ENCODE measurements at regions of chr2 and their contacts with region 1.

Region 1: GRCh38 chr2:152635635-152636298 is 81.5 kb downstream of the PRPF40A start:
- DNase-seq: peak; percentile 51
- H3K4me3 Mint-ChIP-seq: no peak overlapping the region
- H3K27ac Mint-ChIP-seq: no peak overlapping the region
- H3K4me1 Mint-ChIP-seq: peaks cover 6% of the 10 kb centered on the region
- H3K27me3 Mint-ChIP-seq: peaks cover 2% of the 10 kb centered on the region

Region 2: GRCh38 chr2:152036611-152037469 is 598.9 kb before region 1 on chr2:
- intact Hi-C with region 1: loop called (anchors 1 kb)
- DNase-seq: peak; percentile 9
- H3K4me3 Mint-ChIP-seq: no peak overlapping the region
- H3K27ac Mint-ChIP-seq: no peak overlapping the region
- H3K4me1 Mint-ChIP-seq: no peaks in the 10 kb centered on the region
- H3K27me3 Mint-ChIP-seq: peaks cover 5% of the 10 kb centered on the region

Region 3: DNA sequence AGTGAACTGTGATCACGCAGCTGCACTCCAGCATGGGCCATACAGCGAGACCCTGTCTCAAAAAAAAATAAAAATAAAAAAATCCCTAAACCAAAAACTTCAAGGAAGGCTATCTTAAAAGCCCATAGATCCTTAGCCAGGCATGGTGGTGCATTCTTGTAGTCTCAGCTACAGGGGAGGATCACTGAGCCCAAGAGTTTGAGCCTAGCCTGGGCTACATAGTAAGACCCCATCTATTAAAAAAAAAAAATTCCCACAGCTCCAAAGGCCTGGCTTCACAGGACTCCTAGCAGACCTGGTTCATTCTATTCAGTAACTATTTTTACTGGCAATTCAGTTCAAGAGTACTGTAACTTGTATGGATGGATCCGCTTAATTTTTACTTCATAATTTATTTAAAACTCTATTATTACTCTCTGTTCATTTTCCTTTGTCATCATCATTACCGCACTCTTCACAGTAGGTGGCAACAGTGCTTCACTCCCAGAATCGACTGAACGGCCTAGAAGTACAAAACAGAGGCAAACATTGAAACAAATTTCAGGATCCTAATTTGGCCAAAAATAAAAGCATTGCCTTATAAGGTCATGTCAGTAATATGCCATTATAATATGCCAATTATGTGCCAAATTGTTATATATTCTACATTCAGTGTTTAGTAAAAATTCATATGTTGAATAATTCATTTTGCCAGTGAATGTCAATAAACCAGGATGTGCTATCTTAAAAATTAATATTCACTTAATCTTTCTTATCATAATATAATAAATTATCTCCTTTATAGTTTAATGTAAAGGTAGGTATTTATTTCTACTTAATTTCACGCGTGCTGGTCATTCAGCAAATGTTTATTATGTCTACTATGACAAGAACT is 445.9 kb before region 1 on chr2:
- intact Hi-C with region 1: loop called (anchors 1 kb)
- DNase-seq: no peak
- H3K4me3 Mint-ChIP-seq: no peak overlapping the region
- H3K27ac Mint-ChIP-seq: no peak overlapping the region
- H3K4me1 Mint-ChIP-seq: peaks cover 4% of the 10 kb centered on the region
- H3K27me3 Mint-ChIP-seq: peaks cover 7% of the 10 kb centered on the region

Region 4: GRCh38 chr2:152421521-152422370 is 214.0 kb before region 1 on chr2:
- intact Hi-C with region 1: loop called (anchors 5 kb)
- DNase-seq: no peak
- H3K4me3 Mint-ChIP-seq: no peak overlapping the region
- H3K27ac Mint-ChIP-seq: no peak overlapping the region
- H3K4me1 Mint-ChIP-seq: peaks cover 33% of the 10 kb centered on the region
- H3K27me3 Mint-ChIP-seq: no peaks in the 10 kb centered on the region

Region 5: GRCh38 chr2:152573168-152573567 is 62.6 kb before region 1 on chr2:
- intact Hi-C with region 1: no loop called
- DNase-seq: peak; percentile 7
- H3K4me3 Mint-ChIP-seq: no peak overlapping the region
- H3K27ac Mint-ChIP-seq: no peak overlapping the region
- H3K4me1 Mint-ChIP-seq: peaks cover 9% of the 10 kb centered on the region
- H3K27me3 Mint-ChIP-seq: peaks cover 6% of the 10 kb centered on the region

Measured in activated T-helper 1 cell treated with anti-CD3 and anti-CD28 coated beads, Interleukin-12 subunit alpha, Interleukin-12 subunit beta, Interleukin-2, Interleukin-4 antibody, amounts not matched to agents 30 ng/mL and 10 ng/mL and 1 ng/mL, durations not matched to agents 14 hours and 24 hours and 36 hours (primary cell).